ENCODE measurements at regions of chr11 and their contacts with region 1.

Region 1: GRCh38 chr11:797296-798092 is 587 bp downstream of the SLC25A22 start:
- DNase-seq: peak; percentile 67 to 68
- ATAC-seq: peak; percentile 26 to 67 (median 57)
- H3K4me3 ChIP-seq: peak overlapping the region; percentile 45 to 99 (median 78)
- H3K27ac ChIP-seq: peak overlapping the region; percentile 23 to 92 (median 84)
- H3K4me1 ChIP-seq: peaks cover 17 to 42% (median 30%) of the 10 kb centered on the region in 9 donors
- H3K27me3 ChIP-seq: no peaks in the 10 kb centered on the region
- CTCF ChIP-seq: no peak

Region 2: DNA sequence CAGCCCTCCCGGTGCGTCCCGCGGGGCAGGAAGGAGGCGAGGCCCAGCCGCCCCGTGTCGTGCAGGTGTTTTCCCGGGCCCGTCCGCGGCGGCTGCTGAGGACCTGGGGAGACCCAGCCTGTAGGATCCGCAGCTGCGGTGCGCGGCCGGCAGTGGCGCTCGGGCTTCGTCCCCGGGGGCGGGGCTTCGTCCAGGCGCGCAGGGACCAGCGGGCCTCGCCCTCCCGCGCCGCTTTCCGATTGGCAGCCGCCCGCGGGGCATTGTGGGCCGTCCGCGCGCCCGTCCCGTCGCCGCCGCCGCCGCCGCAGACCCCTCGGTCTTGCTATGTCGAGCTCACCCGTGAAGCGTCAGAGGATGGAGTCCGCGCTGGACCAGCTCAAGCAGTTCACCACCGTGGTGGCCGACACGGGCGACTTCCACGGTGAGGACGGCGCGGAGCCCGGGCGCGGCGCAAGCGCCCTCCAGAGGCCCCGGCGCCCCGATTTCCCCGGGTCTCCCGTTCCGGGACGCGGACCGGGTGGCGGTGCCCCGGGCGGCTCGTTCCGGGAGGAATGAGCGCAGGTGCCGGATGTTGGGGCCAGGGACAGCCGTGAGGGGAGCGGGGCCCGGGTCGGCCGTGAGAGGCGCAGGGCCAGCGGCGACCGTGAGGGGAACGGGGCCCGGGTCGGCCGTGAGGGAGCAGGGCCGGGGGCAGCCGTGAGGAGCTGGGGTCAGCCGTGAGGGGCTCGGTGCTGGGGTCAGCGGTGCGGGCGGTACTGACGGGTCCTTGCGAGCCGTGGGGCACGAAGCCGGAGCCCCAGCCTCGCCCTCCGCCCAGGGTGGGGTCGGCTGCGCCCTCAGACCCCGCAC is 50.1 kb before region 1 on chr11 and contains the start of gene TALDO1:
- intact Hi-C with region 1: no loop called
- DNase-seq: peak; percentile 90 to 93
- ATAC-seq: peak; percentile 97 to 99 (median 98)
- H3K4me3 ChIP-seq: peak within 1 kb of the TSS; percentile 84 to 99 (median 95)
- H3K27ac ChIP-seq: peak within 1 kb of the TSS; percentile 19 to 95 (median 90)
- H3K4me1 ChIP-seq: peaks cover 3 to 35% (median 27%) of the 10 kb centered on the region in 9 donors
- H3K27me3 ChIP-seq: no peaks in the 10 kb centered on the region
- CTCF ChIP-seq: peak in 4 of 9 donors; percentile 13 to 49 (median 37)
- total RNA-seq, gene TALDO1: 76.2 to 115 (median 96.3) TPM

Region 3: DNA sequence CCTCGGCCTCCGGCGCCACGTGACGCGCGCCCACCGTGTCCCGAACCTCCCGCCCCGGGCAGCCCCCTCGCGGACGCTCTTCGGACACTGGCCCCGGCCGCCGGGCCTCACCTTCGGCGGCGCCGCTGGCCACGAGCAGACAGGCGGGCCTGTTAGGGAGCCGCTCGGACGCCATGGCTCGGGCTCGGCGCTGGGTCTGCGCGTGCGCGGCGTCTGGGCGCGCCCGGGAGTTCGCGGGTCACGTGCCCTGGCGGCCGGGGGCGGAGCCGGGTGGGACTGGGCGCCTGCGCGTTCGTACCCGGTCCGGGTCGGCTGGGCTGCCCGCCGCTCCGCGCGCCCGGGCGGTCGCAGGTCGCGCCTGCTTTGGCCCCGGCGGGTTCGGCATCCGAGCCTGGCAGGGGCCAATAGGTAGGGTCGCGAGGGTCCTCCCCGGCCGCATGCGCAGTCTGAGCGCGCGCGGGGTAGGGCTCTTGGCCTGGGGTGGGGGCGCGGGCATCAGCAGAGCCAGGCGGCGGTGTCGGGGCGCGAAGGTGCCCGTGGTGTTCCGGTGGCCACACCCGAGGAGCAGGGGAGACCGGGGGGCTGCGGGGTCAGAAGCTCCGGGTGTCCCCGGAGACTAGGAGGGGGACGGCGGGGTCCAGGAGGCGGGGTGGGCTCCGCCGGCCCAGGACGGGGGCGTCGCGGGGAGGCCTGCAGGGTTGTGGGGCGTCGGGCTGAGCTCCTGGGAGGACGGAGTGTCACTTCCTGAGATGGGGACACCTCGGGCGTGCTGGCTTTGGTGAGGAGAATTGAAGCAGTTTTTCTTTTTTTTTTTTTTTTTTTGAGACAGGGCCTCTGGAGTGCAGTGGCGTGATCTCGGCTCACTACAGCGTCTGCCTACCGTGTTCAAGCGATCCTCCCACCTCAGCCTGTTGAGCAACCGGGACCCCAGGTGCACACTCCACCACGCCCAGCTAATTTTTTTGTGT is 19.9 kb before region 1 on chr11 and contains the start of gene GATD1:
- intact Hi-C with region 1: loop called in 2 of 10 experiments (anchors 2 kb)
- DNase-seq: peak; percentile 90 to 96
- ATAC-seq: peak; percentile 86 to 98 (median 92)
- H3K4me3 ChIP-seq: peak within 1 kb of the TSS; percentile 63 to 97 (median 87)
- H3K27ac ChIP-seq: peak within 1 kb of the TSS; percentile 61 to 91 (median 86)
- H3K4me1 ChIP-seq: peaks cover 8 to 53% (median 29%) of the 10 kb centered on the region in 9 donors
- H3K27me3 ChIP-seq: no peaks in the 10 kb centered on the region
- CTCF ChIP-seq: peak in 1 of 9 donors; percentile 7
- total RNA-seq, gene GATD1: 20.6 to 29.4 (median 26.0) TPM

Region 4: GRCh38 chr11:834371-835316 is 37.1 kb after region 1 on chr11:
- intact Hi-C with region 1: loop called in 1 of 10 experiments (anchors 1 kb)
- DNase-seq: peak; percentile 82 to 84
- ATAC-seq: peak; percentile 17 to 73 (median 64)
- H3K4me3 ChIP-seq: peak overlapping the region; percentile 4 to 91 (median 79)
- H3K27ac ChIP-seq: peak overlapping the region; percentile 73 to 99 (median 96)
- H3K4me1 ChIP-seq: peaks cover 22 to 93% (median 78%) of the 10 kb centered on the region in 9 donors
- H3K27me3 ChIP-seq: peaks cover 0 to 29% (median 0%) of the 10 kb centered on the region in 7 donors
- CTCF ChIP-seq: no peak